Naive thymus-derived CD4-positive, alpha-beta T cell (primary cell): ENCODE measurements at regions of chr6 and their contacts with region 1.

Region 1: GRCh38 chr6:2999618-3000557 is at the start of gene NQO2:
- DNase-seq: peak; percentile 68 to 92 (median 81)
- ATAC-seq: peak; percentile 91
- H3K4me3 ChIP-seq: peak within 1 kb of the TSS; percentile 95
- H3K4me3 Mint-ChIP-seq: peak within 1 kb of the TSS; percentile 83 to 95 (median 90)
- H3K27ac ChIP-seq: peak within 1 kb of the TSS; percentile 88
- H3K27ac Mint-ChIP-seq: peak within 1 kb of the TSS; percentile 78 to 96 (median 88)
- H3K4me1 ChIP-seq: peaks cover 5 to 18% of the 10 kb centered on the region in 2 donors
- H3K4me1 Mint-ChIP-seq: peaks cover 11 to 35% (median 26%) of the 10 kb centered on the region in 7 donors
- H3K27me3 ChIP-seq: no peaks in the 10 kb centered on the region
- H3K27me3 Mint-ChIP-seq: peaks cover 0 to 5% (median 0%) of the 10 kb centered on the region in 5 donors
- total RNA-seq, gene NQO2: 8.1 to 34.6 (median 22.6) TPM

Region 2: DNA sequence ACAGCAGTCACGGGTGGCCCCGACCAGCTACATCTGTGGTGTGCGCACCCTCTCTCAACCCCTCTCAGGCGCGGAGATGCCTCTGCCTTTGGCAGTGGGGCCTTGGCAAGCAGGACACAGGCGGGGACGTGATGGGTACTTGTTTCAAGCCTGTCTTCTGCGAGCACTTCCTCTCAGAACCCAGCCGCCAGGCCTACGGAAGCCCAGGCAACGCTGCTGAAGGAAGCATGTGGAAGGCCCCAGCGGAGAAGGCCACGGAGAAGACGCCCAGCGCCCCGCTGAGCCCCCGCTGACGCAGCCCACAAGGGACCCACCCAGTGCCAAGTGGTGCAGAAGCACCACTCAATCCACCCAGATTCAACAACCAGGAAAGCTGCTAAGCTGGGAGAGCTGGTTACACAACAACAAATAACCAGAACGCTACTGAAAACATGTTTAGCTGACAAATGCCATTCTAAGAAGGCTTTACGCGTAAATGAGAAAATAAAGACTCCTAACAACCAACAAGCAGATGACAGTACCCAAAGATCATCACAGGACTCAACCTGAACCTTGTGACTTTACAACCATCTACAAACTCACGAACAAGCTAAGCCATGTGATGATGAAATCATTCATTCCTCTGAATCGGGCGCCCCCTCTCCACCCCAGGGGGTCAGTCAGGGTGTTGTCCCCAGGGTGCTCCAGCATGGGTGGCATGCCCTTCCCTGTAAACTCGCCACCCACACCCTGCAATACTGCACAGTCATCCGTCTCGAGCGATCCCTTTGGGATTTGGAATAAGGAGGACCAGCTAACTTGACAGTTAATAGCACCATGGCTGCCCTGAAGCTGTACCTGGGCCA is 41.3 kb before region 1 on chr6:
- CTCF ChIA-PET with region 1: no interaction called
- POLR2A ChIA-PET with region 1: no interaction called
- intact Hi-C with region 1: no loop called
- DNase-seq: peak in 6 of 9 donors; percentile 17 to 53 (median 40)
- ATAC-seq: peak; percentile 57
- H3K4me3 ChIP-seq: no peak overlapping the region
- H3K4me3 Mint-ChIP-seq: peak overlapping the region in 4 of 10 donors; percentile 13 to 65 (median 54)
- H3K27ac ChIP-seq: no peak overlapping the region
- H3K27ac Mint-ChIP-seq: peak overlapping the region in 8 of 9 donors; percentile 53 to 94 (median 79)
- H3K4me1 ChIP-seq: peaks cover 0 to 14% of the 10 kb centered on the region in 2 donors
- H3K4me1 Mint-ChIP-seq: peaks cover 3 to 61% (median 38%) of the 10 kb centered on the region in 7 donors
- H3K27me3 ChIP-seq: no peaks in the 10 kb centered on the region
- H3K27me3 Mint-ChIP-seq: peaks cover 0 to 7% (median 0%) of the 10 kb centered on the region in 5 donors

Region 3: GRCh38 chr6:3009930-3010329 is 10.0 kb after region 1 on chr6:
- CTCF ChIA-PET with region 1: no interaction called
- POLR2A ChIA-PET with region 1: interaction called, 10 read pairs
- intact Hi-C with region 1: no loop called
- DNase-seq: no peak
- ATAC-seq: no peak
- H3K4me3 ChIP-seq: no peak overlapping the region
- H3K4me3 Mint-ChIP-seq: no peak overlapping the region
- H3K27ac ChIP-seq: no peak overlapping the region
- H3K27ac Mint-ChIP-seq: no peak overlapping the region
- H3K4me1 ChIP-seq: no peaks in the 10 kb centered on the region
- H3K4me1 Mint-ChIP-seq: peaks cover 0 to 15% (median 0%) of the 10 kb centered on the region in 7 donors
- H3K27me3 ChIP-seq: no peaks in the 10 kb centered on the region
- H3K27me3 Mint-ChIP-seq: no peaks in the 10 kb centered on the region

Region 4: GRCh38 chr6:3052481-3053230 is 52.8 kb after region 1 on chr6:
- CTCF ChIA-PET with region 1: interaction called, 17 read pairs
- POLR2A ChIA-PET with region 1: interaction called, 33 read pairs
- intact Hi-C with region 1: loop called (anchors 1 kb)
- DNase-seq: no peak
- ATAC-seq: no peak
- H3K4me3 ChIP-seq: peak overlapping the region; percentile 64
- H3K4me3 Mint-ChIP-seq: peak overlapping the region; percentile 70 to 83 (median 76)
- H3K27ac ChIP-seq: no peak overlapping the region
- H3K27ac Mint-ChIP-seq: peak overlapping the region; percentile 52 to 84 (median 69)
- H3K4me1 ChIP-seq: peaks cover 5% of the 10 kb centered on the region in 2 donors
- H3K4me1 Mint-ChIP-seq: peaks cover 7 to 36% (median 17%) of the 10 kb centered on the region in 7 donors
- H3K27me3 ChIP-seq: no peaks in the 10 kb centered on the region
- H3K27me3 Mint-ChIP-seq: peaks cover 0 to 23% (median 0%) of the 10 kb centered on the region in 5 donors

Region 5: DNA sequence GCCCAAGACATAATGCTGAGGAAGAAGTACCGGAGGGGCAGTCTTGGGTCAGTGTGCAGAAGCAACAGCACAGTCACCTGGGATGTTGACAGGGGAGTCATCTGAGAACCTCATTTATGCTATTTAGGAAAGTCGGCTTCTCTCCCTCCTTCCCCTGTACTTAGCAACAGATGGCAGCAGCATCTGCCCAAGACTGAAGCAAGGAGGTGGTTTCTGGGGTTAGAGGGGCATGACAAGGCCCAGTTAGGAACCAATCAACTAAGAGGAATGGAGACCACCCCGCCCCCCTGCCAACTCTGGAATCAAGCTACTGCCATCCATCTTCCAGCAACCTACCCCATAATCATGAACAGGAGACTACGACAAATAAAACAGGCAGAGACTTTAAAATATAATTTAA is 90.1 kb after region 1 on chr6:
- CTCF ChIA-PET with region 1: no interaction called
- POLR2A ChIA-PET with region 1: no interaction called
- intact Hi-C with region 1: no loop called
- DNase-seq: no peak
- ATAC-seq: no peak
- H3K4me3 ChIP-seq: no peak overlapping the region
- H3K4me3 Mint-ChIP-seq: no peak overlapping the region
- H3K27ac ChIP-seq: no peak overlapping the region
- H3K27ac Mint-ChIP-seq: peak overlapping the region in 4 of 9 donors; percentile 4 to 54 (median 21)
- H3K4me1 ChIP-seq: no peaks in the 10 kb centered on the region
- H3K4me1 Mint-ChIP-seq: peaks cover 3 to 20% (median 12%) of the 10 kb centered on the region in 7 donors
- H3K27me3 ChIP-seq: no peaks in the 10 kb centered on the region
- H3K27me3 Mint-ChIP-seq: no peaks in the 10 kb centered on the region

Region 6: DNA sequence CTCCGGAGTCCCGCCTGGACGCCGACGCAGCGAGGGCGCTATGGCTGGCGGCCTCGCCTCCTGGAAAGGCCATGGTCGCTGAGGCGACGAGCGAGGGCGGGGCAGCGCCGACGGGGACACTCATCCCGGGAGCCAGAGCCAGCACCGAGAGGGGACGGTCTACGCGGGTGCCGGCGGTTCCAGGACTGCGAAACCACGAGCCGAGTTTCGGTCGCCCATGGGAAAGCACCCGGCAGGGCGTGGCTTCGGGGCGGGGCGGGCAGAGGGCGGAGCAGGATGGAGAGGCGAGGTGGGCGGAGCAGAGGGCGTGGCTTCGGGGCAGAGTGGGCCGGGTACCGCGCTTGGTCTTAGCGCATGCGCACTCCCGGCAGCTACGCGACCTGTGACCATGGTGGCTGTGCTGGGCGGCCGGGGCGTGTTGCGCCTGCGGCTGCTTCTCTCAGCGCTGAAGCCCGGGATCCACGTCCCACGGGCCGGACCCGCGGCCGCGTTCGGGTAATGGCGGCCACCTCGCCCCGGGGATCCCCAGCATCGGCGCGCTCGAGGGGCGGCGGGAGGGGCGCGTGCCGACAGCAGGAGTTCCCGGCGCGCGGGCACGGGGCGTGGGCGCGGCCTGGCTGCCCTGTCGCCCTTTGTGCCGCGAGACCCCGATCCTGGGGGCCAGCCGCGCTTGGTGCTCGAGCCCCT is 118.6 kb after region 1 on chr6 and contains the start of gene BPHL:
- CTCF ChIA-PET with region 1: no interaction called
- POLR2A ChIA-PET with region 1: interaction called, 3 read pairs
- intact Hi-C with region 1: loop called (anchors 1 kb)
- DNase-seq: peak; percentile 97 to 100 (median 99)
- ATAC-seq: peak; percentile 99
- H3K4me3 ChIP-seq: peak within 1 kb of the TSS; percentile 91
- H3K4me3 Mint-ChIP-seq: peak within 1 kb of the TSS; percentile 77 to 93 (median 90)
- H3K27ac ChIP-seq: peak within 1 kb of the TSS; percentile 97
- H3K27ac Mint-ChIP-seq: peak within 1 kb of the TSS; percentile 82 to 97 (median 95)
- H3K4me1 ChIP-seq: peaks cover 0 to 4% of the 10 kb centered on the region in 2 donors
- H3K4me1 Mint-ChIP-seq: peaks cover 12 to 19% (median 18%) of the 10 kb centered on the region in 7 donors
- H3K27me3 ChIP-seq: no peaks in the 10 kb centered on the region
- H3K27me3 Mint-ChIP-seq: peaks cover 0 to 5% (median 0%) of the 10 kb centered on the region in 5 donors
- total RNA-seq, gene BPHL: 7.9 to 18.0 (median 10.0) TPM

Region 7: GRCh38 chr6:3251462-3252314 is 251.8 kb after region 1 on chr6:
- CTCF ChIA-PET with region 1: interaction called, 4 read pairs
- POLR2A ChIA-PET with region 1: no interaction called
- intact Hi-C with region 1: loop called in 1 of 2 experiments (anchors 1 kb)
- DNase-seq: peak; percentile 58 to 82 (median 76)
- ATAC-seq: peak; percentile 94
- H3K4me3 ChIP-seq: no peak overlapping the region
- H3K4me3 Mint-ChIP-seq: peak overlapping the region in 5 of 10 donors; percentile 11 to 60 (median 40)
- H3K27ac ChIP-seq: no peak overlapping the region
- H3K27ac Mint-ChIP-seq: peak overlapping the region in 1 of 9 donors; percentile 54
- H3K4me1 ChIP-seq: peaks cover 7 to 8% of the 10 kb centered on the region in 2 donors
- H3K4me1 Mint-ChIP-seq: peaks cover 6 to 12% (median 7%) of the 10 kb centered on the region in 7 donors
- H3K27me3 ChIP-seq: no peaks in the 10 kb centered on the region
- H3K27me3 Mint-ChIP-seq: peaks cover 17 to 51% (median 27%) of the 10 kb centered on the region in 5 donors

Region 8: DNA sequence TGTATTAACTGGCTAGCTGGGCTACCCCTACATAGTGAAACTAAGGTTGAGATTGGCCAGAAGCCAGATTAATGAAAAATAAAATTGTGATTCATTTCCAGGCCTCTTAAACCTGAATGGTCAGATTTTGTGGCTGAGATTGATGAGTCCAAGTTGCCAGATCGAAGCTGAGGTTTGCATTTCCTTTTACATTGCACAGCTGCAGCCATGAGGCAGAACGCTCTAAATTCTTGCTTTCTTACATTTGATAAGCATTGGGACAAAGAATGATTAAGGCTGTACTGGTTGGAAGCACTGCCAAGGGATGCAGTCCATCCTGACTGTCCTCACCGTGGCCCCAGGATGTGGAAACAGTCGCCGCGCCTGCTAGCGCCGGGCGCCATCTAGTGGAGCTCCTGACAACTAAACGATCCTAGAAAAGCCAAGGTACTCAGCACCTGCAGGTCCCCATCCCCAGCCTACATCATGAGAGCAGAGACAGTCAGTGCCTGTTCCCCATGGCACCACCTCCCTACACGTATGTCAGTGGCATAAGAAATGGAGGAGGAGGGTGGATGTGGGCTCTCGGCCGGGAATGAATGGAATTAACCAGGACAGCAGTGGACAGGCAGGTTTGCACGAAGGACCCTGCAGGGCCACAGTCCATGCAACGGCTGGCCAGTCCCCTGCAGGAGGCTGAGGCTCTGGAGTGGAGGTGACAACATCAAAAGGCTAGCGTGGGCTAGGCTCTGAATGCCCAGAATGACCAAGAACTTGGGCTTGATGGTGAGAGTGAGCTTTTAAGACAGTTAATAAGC is 732.7 kb after region 1 on chr6:
- CTCF ChIA-PET with region 1: no interaction called
- POLR2A ChIA-PET with region 1: no interaction called
- intact Hi-C with region 1: loop called (anchors 2 to 5 kb)
- DNase-seq: peak; percentile 34 to 70 (median 60)
- ATAC-seq: peak; percentile 85
- H3K4me3 ChIP-seq: no peak overlapping the region
- H3K4me3 Mint-ChIP-seq: peak overlapping the region in 1 of 10 donors; percentile 42
- H3K27ac ChIP-seq: no peak overlapping the region
- H3K27ac Mint-ChIP-seq: peak overlapping the region in 1 of 9 donors; percentile 88
- H3K4me1 ChIP-seq: no peaks in the 10 kb centered on the region
- H3K4me1 Mint-ChIP-seq: peaks cover 0 to 4% (median 3%) of the 10 kb centered on the region in 7 donors
- H3K27me3 ChIP-seq: no peaks in the 10 kb centered on the region
- H3K27me3 Mint-ChIP-seq: peaks cover 6 to 22% (median 15%) of the 10 kb centered on the region in 5 donors